CD4-positive, alpha-beta T cell (primary cell): ENCODE measurements at regions of chr11 and their contacts with region 1.

Region 1: DNA sequence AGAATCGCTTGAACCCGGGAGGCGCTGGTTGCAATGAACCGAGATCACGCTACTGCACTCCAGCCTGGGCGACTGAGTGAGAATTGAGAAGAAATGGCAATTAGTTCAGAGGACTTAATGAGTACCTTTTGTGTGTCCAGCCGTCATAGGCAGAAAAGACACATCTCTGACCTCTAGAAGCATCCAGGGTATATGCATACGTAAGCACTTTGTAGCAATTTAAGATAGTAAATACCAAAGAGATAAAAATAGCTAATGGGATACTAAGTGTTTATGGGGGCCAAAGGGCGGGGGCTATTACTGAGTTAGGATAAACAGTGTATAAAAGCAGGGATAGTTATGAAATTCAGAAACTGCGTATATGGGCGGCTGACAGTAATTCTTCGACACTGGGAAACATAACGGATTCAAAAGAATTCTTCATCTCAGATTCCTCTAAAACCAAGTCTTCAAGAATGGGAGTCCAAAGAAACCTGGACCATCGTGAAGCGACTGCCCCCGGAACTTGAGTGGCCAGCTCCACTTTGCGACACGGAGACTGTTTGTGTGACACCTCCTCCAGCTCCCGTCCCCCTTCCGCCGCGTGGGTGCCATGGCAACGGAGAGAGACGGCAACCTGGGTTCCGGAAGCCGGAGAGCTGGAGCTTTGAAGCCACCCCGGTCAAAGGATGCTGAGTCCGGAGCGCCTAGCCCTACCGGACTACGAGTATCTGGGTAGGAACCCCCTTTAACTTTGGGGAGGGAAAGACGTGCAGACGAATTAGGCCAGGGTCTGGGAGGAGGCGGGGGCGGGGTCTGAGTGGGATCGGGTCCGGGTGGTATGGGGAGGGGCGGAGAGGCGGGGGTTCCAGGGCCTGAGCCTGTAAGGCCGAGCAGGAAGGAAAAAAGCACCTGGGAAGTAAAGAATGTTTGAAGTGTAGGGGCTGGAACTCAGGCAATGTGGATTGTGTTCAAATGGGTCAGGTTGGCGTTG is at the start of gene CSTPP1:
- DNase-seq: peak; percentile 87 to 95 (median 92)
- ATAC-seq: peak; percentile 96
- H3K4me3 ChIP-seq: peak within 1 kb of the TSS; percentile 73
- H3K4me3 Mint-ChIP-seq: peak within 1 kb of the TSS; percentile 91
- H3K27ac ChIP-seq: peak within 1 kb of the TSS; percentile 28 to 39
- H3K27ac Mint-ChIP-seq: peak within 1 kb of the TSS; percentile 83
- H3K4me1 ChIP-seq: peaks cover 18% of the 10 kb centered on the region
- H3K4me1 Mint-ChIP-seq: peaks cover 22% of the 10 kb centered on the region
- H3K27me3 ChIP-seq: peaks cover 0 to 3% of the 10 kb centered on the region in 2 experiments
- H3K27me3 Mint-ChIP-seq: peaks cover 8% of the 10 kb centered on the region
- CTCF ChIP-seq: no peak
- total RNA-seq, gene CSTPP1: 6.6 to 7.3 TPM

Region 2: GRCh38 chr11:45354976-45355705 is 1581.3 kb before region 1 on chr11:
- CTCF ChIA-PET with region 1: no interaction called
- POLR2A ChIA-PET with region 1: no interaction called
- intact Hi-C with region 1: loop called in 1 of 2 experiments (anchors 10 kb)
- DNase-seq: peak; percentile 82 to 95 (median 90)
- ATAC-seq: peak; percentile 92
- H3K4me3 ChIP-seq: peak overlapping the region; percentile 79
- H3K4me3 Mint-ChIP-seq: peak overlapping the region; percentile 84
- H3K27ac ChIP-seq: peak overlapping the region; percentile 43 to 52
- H3K27ac Mint-ChIP-seq: peak overlapping the region; percentile 57
- H3K4me1 ChIP-seq: peaks cover 17% of the 10 kb centered on the region
- H3K4me1 Mint-ChIP-seq: peaks cover 22% of the 10 kb centered on the region
- H3K27me3 ChIP-seq: no peaks in the 10 kb centered on the region
- H3K27me3 Mint-ChIP-seq: peaks cover 9% of the 10 kb centered on the region
- CTCF ChIP-seq: no peak

Region 3: GRCh38 chr11:46593550-46594373 is 342.7 kb before region 1 on chr11 and contains the start of gene AMBRA1:
- CTCF ChIA-PET with region 1: no interaction called
- POLR2A ChIA-PET with region 1: no interaction called
- intact Hi-C with region 1: loop called in 1 of 2 experiments (anchors 10 kb)
- DNase-seq: peak; percentile 67 to 91 (median 76)
- ATAC-seq: peak; percentile 90
- H3K4me3 ChIP-seq: peak within 1 kb of the TSS; percentile 94
- H3K4me3 Mint-ChIP-seq: peak within 1 kb of the TSS; percentile 92
- H3K27ac ChIP-seq: peak within 1 kb of the TSS; percentile 42 to 55
- H3K27ac Mint-ChIP-seq: peak within 1 kb of the TSS; percentile 85
- H3K4me1 ChIP-seq: peaks cover 33% of the 10 kb centered on the region
- H3K4me1 Mint-ChIP-seq: peaks cover 43% of the 10 kb centered on the region
- H3K27me3 ChIP-seq: no peaks in the 10 kb centered on the region
- H3K27me3 Mint-ChIP-seq: no peaks in the 10 kb centered on the region
- CTCF ChIP-seq: no peak
- total RNA-seq, gene AMBRA1: 29.4 to 31.9 TPM

Region 4: DNA sequence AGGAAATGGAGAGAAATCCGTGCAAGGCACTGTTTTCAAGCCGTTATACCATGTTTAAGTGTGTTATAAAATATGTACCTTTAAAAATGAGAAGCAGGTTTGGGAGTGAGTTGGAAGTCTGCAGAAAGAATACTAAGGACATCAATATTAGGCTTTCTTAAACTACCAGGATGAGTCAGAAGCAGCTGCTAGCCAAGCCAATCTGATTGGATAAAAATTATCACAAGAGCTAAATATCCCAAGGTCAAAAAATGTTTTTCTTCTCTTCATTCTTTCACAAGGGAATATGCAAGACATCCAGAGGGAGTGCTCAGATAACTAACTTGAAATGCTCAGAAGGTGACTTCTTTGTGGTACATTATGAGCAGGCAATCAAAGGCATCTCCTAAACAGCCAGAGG is 71.1 kb before region 1 on chr11:
- CTCF ChIA-PET with region 1: no interaction called
- POLR2A ChIA-PET with region 1: no interaction called
- intact Hi-C with region 1: no loop called
- DNase-seq: no peak
- ATAC-seq: no peak
- H3K4me3 ChIP-seq: no peak overlapping the region
- H3K4me3 Mint-ChIP-seq: no peak overlapping the region
- H3K27ac ChIP-seq: no peak overlapping the region
- H3K27ac Mint-ChIP-seq: no peak overlapping the region
- H3K4me1 ChIP-seq: no peaks in the 10 kb centered on the region
- H3K4me1 Mint-ChIP-seq: no peaks in the 10 kb centered on the region
- H3K27me3 ChIP-seq: peaks cover 0 to 3% of the 10 kb centered on the region in 2 experiments
- H3K27me3 Mint-ChIP-seq: peaks cover 5% of the 10 kb centered on the region
- CTCF ChIP-seq: no peak

Region 5: DNA sequence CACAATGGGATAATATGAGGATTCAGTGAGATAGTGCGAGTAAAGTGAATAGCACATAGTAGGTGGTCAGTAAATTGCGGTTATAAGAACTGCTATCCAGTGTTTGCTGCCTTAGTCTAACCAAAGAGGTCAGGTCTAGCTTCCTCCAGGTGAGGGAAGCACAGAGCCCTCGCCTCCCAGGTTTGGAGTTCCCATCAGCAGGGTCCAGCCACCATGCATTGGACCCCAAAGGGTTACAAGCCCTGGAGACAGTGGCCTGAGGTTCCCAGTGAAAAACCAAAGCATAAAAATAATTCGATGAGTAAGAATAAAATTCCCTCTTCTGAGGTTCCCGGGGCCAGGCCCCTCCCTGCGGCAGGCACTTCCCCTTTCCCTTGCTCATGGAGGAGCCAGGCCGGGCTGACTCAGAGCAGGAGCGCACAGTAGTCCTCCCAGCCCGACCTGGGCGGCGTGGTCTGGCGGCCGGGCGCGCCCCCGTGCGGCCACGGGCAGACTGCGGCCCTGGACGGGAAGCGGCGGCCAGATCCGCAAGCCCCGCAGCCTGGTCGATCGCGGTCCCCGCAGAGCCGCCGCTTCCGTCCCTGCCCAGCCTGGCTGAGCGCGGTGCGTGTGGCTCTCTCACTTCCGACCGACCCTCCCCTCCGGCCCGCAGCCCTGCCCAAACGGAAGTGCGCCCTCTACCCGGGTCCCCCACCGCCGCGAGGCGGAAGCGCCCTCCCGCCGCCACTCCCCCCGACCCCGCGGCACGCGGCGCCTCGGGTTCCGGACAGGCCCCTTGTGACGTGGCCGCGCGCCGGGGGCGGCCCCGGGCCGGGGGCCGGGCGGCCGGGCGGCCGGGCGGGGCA is 471.5 kb after region 1 on chr11 and contains the start of gene SLC39A13:
- CTCF ChIA-PET with region 1: no interaction called
- POLR2A ChIA-PET with region 1: no interaction called
- intact Hi-C with region 1: loop called in 1 of 2 experiments (anchors 10 kb)
- DNase-seq: peak; percentile 78 to 95 (median 89)
- ATAC-seq: peak; percentile 86
- H3K4me3 ChIP-seq: peak within 1 kb of the TSS; percentile 74
- H3K4me3 Mint-ChIP-seq: peak within 1 kb of the TSS; percentile 99
- H3K27ac ChIP-seq: peak within 1 kb of the TSS; percentile 84 to 88
- H3K27ac Mint-ChIP-seq: peak within 1 kb of the TSS; percentile 95
- H3K4me1 ChIP-seq: peaks cover 40% of the 10 kb centered on the region
- H3K4me1 Mint-ChIP-seq: peaks cover 17% of the 10 kb centered on the region
- H3K27me3 ChIP-seq: no peaks in the 10 kb centered on the region
- H3K27me3 Mint-ChIP-seq: no peaks in the 10 kb centered on the region
- CTCF ChIP-seq: peak; percentile 84
- total RNA-seq, gene SLC39A13: 36.6 to 39.2 TPM

Region 6: DNA sequence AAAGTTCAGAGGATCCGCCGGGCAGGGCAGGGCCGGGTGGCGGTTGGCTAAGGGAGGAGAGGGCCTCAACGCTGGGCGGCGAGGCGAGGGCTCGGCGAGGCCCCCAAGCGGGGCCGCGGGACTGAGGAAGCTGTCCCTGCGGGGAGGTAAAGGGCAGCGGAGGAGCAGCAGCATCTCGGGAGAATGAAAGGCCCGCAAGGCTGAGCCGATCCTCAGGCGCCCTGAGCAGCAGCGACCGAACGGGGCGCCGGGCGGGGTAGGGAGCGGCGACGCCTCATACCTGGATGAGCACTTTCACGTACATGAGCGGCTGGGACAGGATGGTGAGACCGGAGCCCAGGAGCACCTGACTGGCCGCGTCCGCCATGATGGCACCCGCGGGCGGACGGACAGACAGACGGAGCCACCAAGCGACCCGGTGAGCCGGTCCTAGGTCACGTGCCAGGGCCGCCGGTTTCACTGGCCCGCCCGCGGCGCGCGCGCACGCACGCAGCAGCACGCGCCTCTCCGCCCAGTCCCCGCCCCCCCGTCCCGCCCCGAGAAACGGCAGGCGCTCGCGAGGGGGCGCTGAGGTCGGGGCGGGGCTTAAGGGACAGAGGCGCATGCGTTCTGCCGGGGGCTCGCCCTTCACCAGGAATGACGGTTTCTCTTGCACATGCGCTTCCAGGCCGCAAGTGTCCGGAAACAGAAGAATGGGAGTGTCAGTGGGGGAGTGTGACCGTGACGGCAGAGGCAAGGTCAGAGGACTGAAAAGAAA is 705.9 kb after region 1 on chr11 and contains the start of gene MTCH2:
- CTCF ChIA-PET with region 1: no interaction called
- POLR2A ChIA-PET with region 1: no interaction called
- intact Hi-C with region 1: loop called in 1 of 2 experiments (anchors 5 kb)
- DNase-seq: peak; percentile 91 to 99 (median 95)
- ATAC-seq: peak; percentile 92
- H3K4me3 ChIP-seq: peak within 1 kb of the TSS; percentile 96
- H3K4me3 Mint-ChIP-seq: peak within 1 kb of the TSS; percentile 90
- H3K27ac ChIP-seq: peak within 1 kb of the TSS; percentile 88 to 91
- H3K27ac Mint-ChIP-seq: peak within 1 kb of the TSS; percentile 89
- H3K4me1 ChIP-seq: peaks cover 28% of the 10 kb centered on the region
- H3K4me1 Mint-ChIP-seq: peaks cover 26% of the 10 kb centered on the region
- H3K27me3 ChIP-seq: no peaks in the 10 kb centered on the region
- H3K27me3 Mint-ChIP-seq: no peaks in the 10 kb centered on the region
- CTCF ChIP-seq: peak; percentile 6
- total RNA-seq, gene MTCH2: 11.8 to 12.7 TPM